Panc1 (cell line): ENCODE measurements at regions of chr14 and their contacts with region 1.

Region 1: DNA sequence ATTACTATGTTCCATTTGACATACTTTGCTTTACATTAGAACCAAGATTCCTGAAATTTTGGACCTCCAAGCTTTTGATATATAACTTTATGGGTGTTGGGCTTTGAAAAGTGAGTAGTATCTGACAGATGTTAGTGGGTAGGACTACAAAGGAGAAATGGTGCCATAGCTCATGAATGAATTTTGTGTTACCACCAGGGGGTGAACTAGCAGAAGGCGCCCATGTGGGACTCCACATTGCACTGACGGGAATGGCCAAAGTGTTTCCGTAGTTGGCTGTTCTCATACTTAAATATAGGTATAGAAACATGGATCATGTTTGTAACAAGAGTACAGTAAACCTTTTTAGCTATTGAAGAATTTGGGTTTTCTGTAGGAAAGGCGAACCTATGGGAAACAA is 337.5 kb downstream of the FLRT2 start:
- DNase-seq: no peak
- ATAC-seq: no peak
- H3K4me3 ChIP-seq: no peak overlapping the region
- H3K27ac ChIP-seq: no peak overlapping the region
- H3K4me1 ChIP-seq: no peaks in the 10 kb centered on the region
- H3K27me3 ChIP-seq: no peaks in the 10 kb centered on the region
- CTCF ChIP-seq: peak; percentile 27

Region 2: GRCh38 chr14:85380881-85381280 is 486.6 kb before region 1 on chr14:
- CTCF ChIA-PET with region 1: interaction called, 14 read pairs
- POLR2A ChIA-PET with region 1: no interaction called
- in situ Hi-C with region 1: no loop called
- intact Hi-C with region 1: no loop called
- DNase-seq: no peak
- ATAC-seq: no peak
- H3K4me3 ChIP-seq: no peak overlapping the region
- H3K27ac ChIP-seq: no peak overlapping the region
- H3K4me1 ChIP-seq: no peaks in the 10 kb centered on the region
- H3K27me3 ChIP-seq: no peaks in the 10 kb centered on the region
- CTCF ChIP-seq: no peak

Region 3: DNA sequence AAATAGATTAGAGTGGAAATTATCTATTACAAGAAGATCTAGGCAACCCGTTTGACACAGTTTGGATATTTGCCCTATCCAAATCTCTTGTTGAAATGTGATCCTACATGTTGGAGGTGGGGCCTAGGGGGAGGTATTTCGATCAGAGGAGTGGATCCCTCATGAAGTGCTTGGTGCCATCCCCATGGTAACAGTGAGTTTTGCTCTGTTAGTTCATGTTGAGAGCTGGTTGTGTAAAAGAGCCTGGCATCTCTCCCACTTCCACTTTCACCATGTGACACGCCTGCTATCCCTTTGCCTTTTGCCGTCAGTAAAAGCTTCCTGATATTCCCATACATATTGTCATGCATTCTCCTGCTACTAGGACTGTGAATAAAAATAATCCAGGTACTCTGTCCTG is 403.9 kb before region 1 on chr14:
- CTCF ChIA-PET with region 1: no interaction called
- POLR2A ChIA-PET with region 1: no interaction called
- in situ Hi-C with region 1: no loop called
- intact Hi-C with region 1: no loop called
- DNase-seq: no peak
- ATAC-seq: no peak
- H3K4me3 ChIP-seq: no peak overlapping the region
- H3K27ac ChIP-seq: no peak overlapping the region
- H3K4me1 ChIP-seq: no peaks in the 10 kb centered on the region
- H3K27me3 ChIP-seq: no peaks in the 10 kb centered on the region
- CTCF ChIP-seq: no peak